AG04450 (cell line): ENCODE measurements at regions of chr9 and their contacts with region 1.

Region 1: DNA sequence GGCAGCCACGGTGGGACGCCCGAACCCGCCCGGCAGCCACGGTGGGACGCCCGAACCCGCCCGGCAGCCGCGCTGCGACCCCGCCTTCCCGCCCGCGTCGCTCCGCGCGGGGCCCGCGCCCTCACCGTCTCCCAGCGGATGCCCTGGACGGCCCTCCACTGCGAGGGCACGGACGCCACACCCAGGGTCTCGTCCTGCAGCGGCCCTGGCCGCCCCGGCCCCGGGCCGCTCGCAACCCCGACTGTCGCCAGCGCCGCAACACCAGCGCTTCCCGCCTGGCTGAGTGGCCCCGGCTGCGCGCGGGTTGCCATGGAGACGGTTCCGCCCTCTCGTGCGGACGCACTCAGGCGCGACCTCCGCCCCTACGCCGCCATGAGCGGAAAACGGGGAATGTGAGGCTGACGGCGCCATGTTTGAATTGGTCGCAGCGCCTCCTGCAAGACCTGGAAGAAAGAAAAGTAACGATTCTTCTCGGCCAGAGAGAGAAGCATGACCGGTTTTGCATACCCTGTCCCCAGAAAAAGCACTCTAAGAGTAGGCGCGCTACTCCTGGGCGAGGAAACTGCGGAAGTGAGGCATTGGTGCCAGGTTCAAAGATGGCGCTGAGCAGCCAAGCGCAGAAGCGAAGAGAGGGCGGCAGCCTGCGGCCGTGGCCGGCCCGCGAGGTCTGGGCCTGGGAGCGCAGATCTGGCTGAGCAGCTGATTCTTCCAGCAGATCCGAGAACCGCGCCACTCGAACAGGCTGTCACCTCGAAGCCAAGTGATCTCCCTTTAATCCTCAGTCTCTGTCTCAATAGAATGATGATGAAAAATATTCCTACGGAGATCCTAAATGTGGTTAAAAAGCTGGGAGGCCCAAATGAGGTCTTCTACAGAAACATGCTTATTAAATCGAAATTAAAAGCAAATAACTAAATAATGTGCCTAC is at the start of gene DYNC2I2:
- DNase-seq: peak; percentile 80
- H3K4me3 ChIP-seq: peak within 1 kb of the TSS; percentile 66
- H3K27ac ChIP-seq: peak within 1 kb of the TSS; percentile 97
- H3K27me3 ChIP-seq: no peaks in the 10 kb centered on the region
- CTCF ChIP-seq: no peak
- polyA plus RNA-seq, gene DYNC2I2: 10.9 and 16.7 TPM in 2 replicates

Region 2: DNA sequence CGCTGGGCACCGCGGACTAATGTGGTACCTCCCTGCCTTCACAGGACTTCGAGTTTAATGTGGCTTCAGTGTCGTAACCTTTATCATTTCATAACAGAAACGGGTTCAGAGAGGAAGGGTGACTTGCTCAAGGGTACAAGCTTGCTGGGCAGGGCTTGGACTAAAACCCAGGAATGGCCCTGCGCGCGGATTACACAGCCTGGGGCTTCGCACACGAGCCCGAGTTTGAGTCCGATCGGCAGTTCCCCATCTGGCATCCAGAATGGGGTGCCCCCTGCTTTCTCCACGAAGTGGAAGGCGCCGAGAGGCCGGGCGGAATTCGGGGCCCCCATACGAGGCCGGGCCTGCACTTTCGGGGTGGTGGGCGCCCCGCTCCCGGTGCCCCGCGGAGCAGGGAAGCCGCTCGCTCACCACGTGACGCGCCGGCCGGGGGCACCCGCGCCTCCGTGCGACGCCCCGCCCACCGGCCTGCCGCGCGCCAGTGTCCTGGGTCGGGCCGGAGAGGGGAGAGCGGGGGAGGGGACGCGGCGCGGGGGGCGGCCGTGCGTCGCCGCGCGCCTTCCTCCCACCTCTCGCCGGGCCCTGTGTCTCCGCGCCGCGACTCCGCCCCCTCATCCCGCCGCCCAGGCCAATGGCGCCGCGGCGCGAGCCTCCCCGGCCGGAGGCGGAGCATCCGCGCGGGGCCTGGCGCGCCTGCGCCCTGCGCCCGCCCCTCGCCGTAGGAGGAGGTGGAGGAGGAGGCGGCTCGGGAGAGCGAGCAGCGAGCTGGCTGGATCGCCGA is 32.0 kb after region 1 on chr9 and contains the start of gene SET:
- CTCF ChIA-PET with region 1: no interaction called
- POLR2A ChIA-PET with region 1: interaction called, 11 read pairs
- DNase-seq: peak; percentile 66
- H3K4me3 ChIP-seq: peak within 1 kb of the TSS; percentile 94
- H3K27ac ChIP-seq: peak within 1 kb of the TSS; percentile 78
- H3K27me3 ChIP-seq: no peaks in the 10 kb centered on the region
- CTCF ChIP-seq: no peak
- polyA plus RNA-seq, gene SET: 193 and 259 TPM in 2 replicates